Aorta (tissue), 5 donors: ENCODE measurements at regions of chr3 and their contacts with region 1.

Region 1: GRCh38 chr3:73727117-73727821 is 102.5 kb upstream of the PDZRN3 start:
- DNase-seq: peak in 1 of 2 donors; percentile 56
- ATAC-seq: peak; percentile 74
- H3K4me3 ChIP-seq: no peak overlapping the region
- H3K27ac ChIP-seq: peak overlapping the region in 1 of 2 donors; percentile 43
- H3K4me1 ChIP-seq: peaks cover 0 to 2% of the 10 kb centered on the region in 2 donors
- H3K27me3 ChIP-seq: no peaks in the 10 kb centered on the region

Region 2: DNA sequence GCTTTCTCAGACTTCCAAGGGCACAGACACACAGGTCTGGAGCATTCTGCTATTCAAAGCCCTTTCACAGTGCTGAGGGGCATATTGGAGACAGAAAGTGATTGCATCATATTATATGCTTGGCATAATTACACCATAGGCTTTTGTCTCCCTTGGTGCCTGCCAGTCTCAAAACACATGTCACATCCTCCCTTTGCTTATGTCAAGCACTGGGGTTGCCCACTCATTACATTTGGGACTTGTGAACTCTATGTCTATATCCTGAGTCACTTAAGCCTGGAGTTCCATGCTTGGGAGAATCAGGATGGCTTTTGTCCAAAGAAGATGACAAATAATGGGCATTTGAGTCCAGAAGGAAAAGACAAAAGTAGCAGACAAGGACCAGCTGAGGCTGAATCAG is 90.2 kb before region 1 on chr3:
- intact Hi-C with region 1: no loop called
- DNase-seq: no peak
- ATAC-seq: no peak
- H3K4me3 ChIP-seq: no peak overlapping the region
- H3K27ac ChIP-seq: peak overlapping the region; percentile 63 to 76
- H3K4me1 ChIP-seq: peaks cover 0 to 4% of the 10 kb centered on the region in 2 donors
- H3K27me3 ChIP-seq: no peaks in the 10 kb centered on the region

Region 3: GRCh38 chr3:73786321-73786807 is 59.1 kb after region 1 on chr3:
- intact Hi-C with region 1: loop called in 1 of 2 experiments (anchors 10 kb)
- DNase-seq: peak; percentile 80 to 84
- ATAC-seq: peak; percentile 80
- H3K4me3 ChIP-seq: no peak overlapping the region
- H3K27ac ChIP-seq: peak overlapping the region; percentile 43 to 62
- H3K4me1 ChIP-seq: peaks cover 4 to 9% of the 10 kb centered on the region in 2 donors
- H3K27me3 ChIP-seq: no peaks in the 10 kb centered on the region